HCT116 (cell line): ENCODE measurements at regions of chr11 and their contacts with region 1.

Region 1: DNA sequence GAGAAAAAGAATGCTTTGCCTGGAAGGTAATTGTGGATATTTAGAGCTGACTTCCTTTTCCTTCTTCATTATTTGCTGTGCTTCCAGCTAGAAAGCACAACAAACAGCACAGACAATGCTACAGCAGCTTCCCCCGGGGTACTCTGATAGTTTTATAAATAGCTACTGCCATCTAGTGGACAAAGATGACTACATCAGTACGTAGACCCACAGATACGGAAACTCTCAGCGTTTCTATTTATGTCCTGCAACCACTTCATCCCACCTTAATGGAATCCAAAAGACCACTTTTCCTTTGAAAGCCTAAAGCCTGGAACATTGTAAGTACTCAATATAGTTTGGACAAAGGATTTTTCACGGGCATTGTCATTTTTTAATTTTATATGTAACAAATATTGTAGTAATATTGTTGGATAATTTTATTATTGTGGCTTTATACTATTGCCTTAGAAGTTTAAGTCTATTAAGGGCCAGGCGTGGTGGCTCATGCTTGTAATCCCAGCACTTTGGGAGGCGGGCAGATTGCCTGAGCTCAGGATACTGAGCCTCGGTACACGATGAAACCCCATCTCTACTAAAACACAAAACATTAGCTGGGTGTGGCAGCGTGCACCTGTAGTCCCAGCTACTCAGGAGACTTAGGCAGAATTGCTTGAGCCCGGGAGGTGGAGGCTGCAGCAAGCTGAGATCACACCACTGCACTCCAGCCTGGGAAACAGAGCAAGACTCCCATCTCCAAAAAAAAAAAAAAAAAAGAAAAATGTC is 7.5 kb downstream of the HSPA8 start:
- DNase-seq: peak; percentile 56
- ATAC-seq: peak; percentile 66
- H3K4me3 ChIP-seq: no peak overlapping the region
- H3K27ac ChIP-seq: no peak overlapping the region
- H3K4me1 ChIP-seq: peaks cover 0 to 7% of the 10 kb centered on the region in 2 experiments; a peak in 1 of 4 replicates
- H3K27me3 ChIP-seq: no peaks in the 10 kb centered on the region
- CTCF ChIP-seq: peak; percentile 54 to 75 (median 59); a peak in 5 of 6 replicates
- POLR2A ChIP-seq: peak; percentile 9
- RAD21 ChIP-seq: peak; percentile 77

Region 2: DNA sequence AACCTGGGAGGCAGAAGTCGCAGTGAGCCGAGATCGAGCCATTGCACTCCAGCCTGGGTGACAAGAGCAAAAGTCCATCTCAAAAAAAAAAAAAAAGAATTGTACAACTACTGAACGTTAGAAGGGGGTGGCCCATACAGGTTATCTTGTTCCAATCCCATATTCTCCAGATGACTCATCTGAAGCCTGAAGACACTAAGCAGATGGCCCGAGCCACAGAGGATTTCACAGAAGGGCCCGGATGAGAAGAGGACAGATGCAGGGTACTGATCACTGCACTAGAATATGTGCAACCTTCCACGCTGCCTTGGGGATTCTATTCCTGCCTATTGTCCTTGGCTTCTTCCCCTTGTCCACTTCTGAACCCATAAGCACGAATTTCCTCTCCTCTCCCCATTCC is 469.8 kb before region 1 on chr11:
- CTCF ChIA-PET with region 1: interaction called, 4 read pairs
- POLR2A ChIA-PET with region 1: no interaction called
- RAD21 ChIA-PET with region 1: no interaction called
- intact Hi-C with region 1: loop called (anchors 5 kb)
- DNase-seq: no peak
- ATAC-seq: no peak
- H3K4me3 ChIP-seq: no peak overlapping the region
- H3K27ac ChIP-seq: no peak overlapping the region
- H3K4me1 ChIP-seq: peaks cover 5 to 15% of the 10 kb centered on the region in 2 experiments
- H3K27me3 ChIP-seq: no peaks in the 10 kb centered on the region
- CTCF ChIP-seq: no peak
- POLR2A ChIP-seq: no peak
- RAD21 ChIP-seq: no peak

Region 3: DNA sequence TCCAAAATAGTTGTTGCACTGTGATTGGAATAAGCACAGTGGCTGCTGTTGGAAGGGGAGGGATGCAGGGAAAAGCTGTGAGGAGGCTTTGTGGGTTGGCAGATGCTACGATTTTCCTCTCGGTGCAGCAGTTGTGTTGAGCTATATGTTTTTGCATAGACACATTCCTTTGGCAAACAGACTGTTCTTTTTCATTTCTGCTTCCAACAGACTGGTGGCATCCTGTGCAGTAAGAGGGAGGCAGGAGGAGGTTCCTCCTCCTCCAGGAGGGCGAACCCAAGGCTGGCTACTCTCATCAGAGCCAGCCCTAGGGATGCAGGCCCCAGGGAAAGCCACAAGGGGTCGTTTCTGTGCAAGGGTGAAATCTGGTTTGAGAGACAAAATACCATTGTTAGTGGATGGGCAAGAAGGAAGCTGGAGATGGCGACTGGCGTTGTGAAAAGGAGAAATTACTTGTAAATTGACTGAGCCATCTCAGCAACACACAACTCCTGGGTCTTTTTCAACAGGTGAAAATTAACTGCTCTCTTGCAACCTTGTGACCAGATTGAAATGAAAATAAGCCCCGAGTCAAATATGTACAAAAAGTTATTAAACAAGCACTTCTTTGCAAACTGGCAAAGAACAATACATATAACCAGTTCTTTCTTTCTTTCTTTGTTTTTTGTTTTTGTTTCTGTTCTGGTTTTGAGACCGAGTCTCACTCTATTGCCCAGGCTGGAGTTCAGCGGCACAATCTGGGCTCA is 425.5 kb before region 1 on chr11:
- CTCF ChIA-PET with region 1: interaction called, 15 read pairs
- POLR2A ChIA-PET with region 1: interaction called, 4 read pairs
- RAD21 ChIA-PET with region 1: no interaction called
- intact Hi-C with region 1: loop called (anchors 1 kb)
- DNase-seq: peak; percentile 64
- ATAC-seq: peak; percentile 99
- H3K4me3 ChIP-seq: no peak overlapping the region
- H3K27ac ChIP-seq: no peak overlapping the region
- H3K4me1 ChIP-seq: peaks cover 3 to 19% of the 10 kb centered on the region in 2 experiments; a peak in 3 of 4 replicates
- H3K27me3 ChIP-seq: no peaks in the 10 kb centered on the region
- CTCF ChIP-seq: peak; percentile 90 to 95 (median 92)
- POLR2A ChIP-seq: no peak
- RAD21 ChIP-seq: peak; percentile 90

Region 4: GRCh38 chr11:122796128-122796717 is 258.3 kb before region 1 on chr11:
- CTCF ChIA-PET with region 1: interaction called, 4 read pairs
- POLR2A ChIA-PET with region 1: no interaction called
- RAD21 ChIA-PET with region 1: no interaction called
- intact Hi-C with region 1: loop called (anchors 2 kb)
- DNase-seq: no peak
- ATAC-seq: peak; percentile 92
- H3K4me3 ChIP-seq: no peak overlapping the region
- H3K27ac ChIP-seq: no peak overlapping the region
- H3K4me1 ChIP-seq: peaks cover 0 to 6% of the 10 kb centered on the region in 2 experiments; a peak in 1 of 4 replicates
- H3K27me3 ChIP-seq: no peaks in the 10 kb centered on the region
- CTCF ChIP-seq: peak; percentile 61 to 92 (median 92)
- POLR2A ChIP-seq: no peak
- RAD21 ChIP-seq: peak; percentile 77

Region 5: GRCh38 chr11:122863704-122864326 is 190.7 kb before region 1 on chr11:
- CTCF ChIA-PET with region 1: interaction called, 61 read pairs
- POLR2A ChIA-PET with region 1: interaction called, 3 read pairs
- RAD21 ChIA-PET with region 1: interaction called, 3 to 4 read pairs
- intact Hi-C with region 1: loop called (anchors 1 kb)
- DNase-seq: peak; percentile 37
- ATAC-seq: peak; percentile 58; the same call in 1 of the 2 replicates
- H3K4me3 ChIP-seq: no peak overlapping the region
- H3K27ac ChIP-seq: no peak overlapping the region
- H3K4me1 ChIP-seq: peaks cover 0 to 3% of the 10 kb centered on the region in 2 experiments; a peak in 2 of 4 replicates
- H3K27me3 ChIP-seq: peaks cover 4% of the 10 kb centered on the region; the same call in 1 of the 2 replicates
- CTCF ChIP-seq: peak; percentile 88 to 91 (median 88)
- POLR2A ChIP-seq: no peak
- RAD21 ChIP-seq: peak; percentile 83

Region 6: DNA sequence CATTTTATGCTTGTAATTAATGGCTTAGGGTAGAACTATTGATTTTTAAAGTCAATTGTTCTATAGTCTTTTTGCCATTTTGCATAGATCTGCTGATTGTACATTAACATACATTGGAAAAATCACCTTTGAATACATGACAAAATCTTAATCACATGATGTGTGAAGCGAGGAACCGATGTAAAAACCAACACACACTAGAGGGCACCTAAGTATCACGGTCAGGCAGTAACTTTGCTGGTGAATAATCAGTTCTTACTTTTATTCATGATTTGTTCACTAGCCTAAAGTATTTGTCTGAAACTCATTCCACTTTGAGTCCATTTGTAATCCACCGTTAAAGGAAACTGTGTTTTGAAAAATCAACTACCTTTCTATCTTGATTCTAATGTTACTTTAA is 143.7 kb before region 1 on chr11:
- CTCF ChIA-PET with region 1: interaction called, 3 read pairs
- POLR2A ChIA-PET with region 1: no interaction called
- RAD21 ChIA-PET with region 1: no interaction called
- intact Hi-C with region 1: loop called (anchors 10 kb)
- DNase-seq: peak; percentile 8
- ATAC-seq: peak; percentile 49; the same call in 1 of the 2 replicates
- H3K4me3 ChIP-seq: no peak overlapping the region
- H3K27ac ChIP-seq: no peak overlapping the region
- H3K4me1 ChIP-seq: no peaks in the 10 kb centered on the region
- H3K27me3 ChIP-seq: no peaks in the 10 kb centered on the region
- CTCF ChIP-seq: peak; percentile 31 to 58 (median 55); a peak in 4 of 6 replicates
- POLR2A ChIP-seq: no peak
- RAD21 ChIP-seq: peak; percentile 75

Region 7: DNA sequence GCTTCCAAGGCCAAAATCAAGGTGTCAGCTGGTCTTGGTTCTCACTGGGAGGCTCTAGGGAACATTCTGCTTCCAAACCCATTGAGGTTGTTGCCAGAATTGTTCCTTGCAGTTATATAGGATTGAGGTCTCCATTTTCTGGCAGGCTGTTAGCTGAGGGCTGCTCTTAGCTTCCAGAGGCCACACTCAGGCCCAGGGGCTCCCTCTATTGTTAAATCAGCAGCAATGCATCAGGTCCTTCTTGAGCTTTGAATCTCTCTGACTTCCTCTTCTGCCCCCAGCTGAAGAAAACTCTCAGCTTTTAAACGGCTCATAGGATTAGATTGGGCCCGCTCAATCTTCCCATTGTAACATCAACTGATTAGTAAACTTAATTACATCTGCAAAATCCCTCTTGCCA is 33.5 kb before region 1 on chr11:
- CTCF ChIA-PET with region 1: interaction called, 12 read pairs
- POLR2A ChIA-PET with region 1: interaction called, 7 read pairs
- RAD21 ChIA-PET with region 1: interaction called, 3 to 5 read pairs
- intact Hi-C with region 1: no loop called
- DNase-seq: peak; percentile 33
- ATAC-seq: peak; percentile 84
- H3K4me3 ChIP-seq: no peak overlapping the region
- H3K27ac ChIP-seq: no peak overlapping the region
- H3K4me1 ChIP-seq: peaks cover 0 to 11% of the 10 kb centered on the region in 2 experiments; a peak in 2 of 4 replicates
- H3K27me3 ChIP-seq: no peaks in the 10 kb centered on the region
- CTCF ChIP-seq: peak; percentile 65 to 73 (median 73)
- POLR2A ChIP-seq: no peak
- RAD21 ChIP-seq: peak; percentile 73